Activated B cell treated with CpG ODN at 0.5 μM for 24 hours (primary cell): ENCODE measurements at regions of chr15 and their contacts with region 1.

Region 1: GRCh38 chr15:78944669-78945407 is at the start of gene CTSH:
- DNase-seq: peak; percentile 91
- ATAC-seq: peak; percentile 95
- H3K4me3 Mint-ChIP-seq: peak within 1 kb of the TSS; percentile 98
- H3K27ac Mint-ChIP-seq: peak within 1 kb of the TSS; percentile 89
- H3K4me1 Mint-ChIP-seq: peaks cover 40% of the 10 kb centered on the region
- H3K27me3 Mint-ChIP-seq: no peaks in the 10 kb centered on the region
- CTCF ChIP-seq: no peak
- total RNA-seq, gene CTSH: 721 and 762 TPM in 2 replicates

Region 2: GRCh38 chr15:78872972-78873792 is 71.7 kb before region 1 on chr15:
- CTCF ChIA-PET with region 1: interaction called, 3 read pairs
- POLR2A ChIA-PET with region 1: interaction called, 13 read pairs
- intact Hi-C with region 1: no loop called
- DNase-seq: peak; percentile 81
- ATAC-seq: peak; percentile 72
- H3K4me3 Mint-ChIP-seq: peak overlapping the region; percentile 98
- H3K27ac Mint-ChIP-seq: peak overlapping the region; percentile 100
- H3K4me1 Mint-ChIP-seq: peaks cover 39% of the 10 kb centered on the region
- H3K27me3 Mint-ChIP-seq: no peaks in the 10 kb centered on the region
- CTCF ChIP-seq: no peak

Region 3: GRCh38 chr15:78960308-78960707 is 15.5 kb after region 1 on chr15:
- CTCF ChIA-PET with region 1: no interaction called
- POLR2A ChIA-PET with region 1: no interaction called
- intact Hi-C with region 1: no loop called
- DNase-seq: no peak
- ATAC-seq: no peak
- H3K4me3 Mint-ChIP-seq: no peak overlapping the region
- H3K27ac Mint-ChIP-seq: no peak overlapping the region
- H3K4me1 Mint-ChIP-seq: no peaks in the 10 kb centered on the region
- H3K27me3 Mint-ChIP-seq: no peaks in the 10 kb centered on the region
- CTCF ChIP-seq: no peak

Region 4: GRCh38 chr15:78979456-78980320 is 34.9 kb after region 1 on chr15:
- CTCF ChIA-PET with region 1: interaction called, 4 read pairs
- POLR2A ChIA-PET with region 1: interaction called, 42 read pairs
- intact Hi-C with region 1: loop called (anchors 1 kb)
- DNase-seq: no peak
- ATAC-seq: no peak
- H3K4me3 Mint-ChIP-seq: peak overlapping the region; percentile 77
- H3K27ac Mint-ChIP-seq: peak overlapping the region; percentile 91
- H3K4me1 Mint-ChIP-seq: peaks cover 45% of the 10 kb centered on the region
- H3K27me3 Mint-ChIP-seq: no peaks in the 10 kb centered on the region
- CTCF ChIP-seq: no peak

Region 5: DNA sequence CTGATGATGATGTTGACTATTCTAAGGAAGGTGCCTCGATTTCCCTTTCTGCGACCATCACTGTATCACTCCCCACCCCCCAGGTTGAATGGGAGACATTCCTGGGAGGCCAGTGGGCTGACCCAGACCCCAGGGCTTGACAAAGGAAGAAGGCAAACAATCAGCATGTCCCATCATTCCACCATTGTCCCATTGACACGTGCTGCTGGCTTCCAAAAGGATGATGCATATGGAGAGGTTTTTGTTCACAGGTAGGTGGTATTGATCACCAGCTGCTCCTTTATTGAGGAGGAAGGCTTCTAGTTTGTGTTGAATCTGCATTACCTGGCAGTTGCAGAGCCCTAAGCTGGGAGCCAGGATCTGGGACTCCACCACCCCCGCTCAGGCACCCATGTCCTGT is 115.3 kb after region 1 on chr15:
- CTCF ChIA-PET with region 1: no interaction called
- POLR2A ChIA-PET with region 1: interaction called, 13 read pairs
- intact Hi-C with region 1: no loop called
- DNase-seq: no peak
- ATAC-seq: no peak
- H3K4me3 Mint-ChIP-seq: no peak overlapping the region
- H3K27ac Mint-ChIP-seq: no peak overlapping the region
- H3K4me1 Mint-ChIP-seq: no peaks in the 10 kb centered on the region
- H3K27me3 Mint-ChIP-seq: peaks cover 15% of the 10 kb centered on the region
- CTCF ChIP-seq: no peak

Region 6: DNA sequence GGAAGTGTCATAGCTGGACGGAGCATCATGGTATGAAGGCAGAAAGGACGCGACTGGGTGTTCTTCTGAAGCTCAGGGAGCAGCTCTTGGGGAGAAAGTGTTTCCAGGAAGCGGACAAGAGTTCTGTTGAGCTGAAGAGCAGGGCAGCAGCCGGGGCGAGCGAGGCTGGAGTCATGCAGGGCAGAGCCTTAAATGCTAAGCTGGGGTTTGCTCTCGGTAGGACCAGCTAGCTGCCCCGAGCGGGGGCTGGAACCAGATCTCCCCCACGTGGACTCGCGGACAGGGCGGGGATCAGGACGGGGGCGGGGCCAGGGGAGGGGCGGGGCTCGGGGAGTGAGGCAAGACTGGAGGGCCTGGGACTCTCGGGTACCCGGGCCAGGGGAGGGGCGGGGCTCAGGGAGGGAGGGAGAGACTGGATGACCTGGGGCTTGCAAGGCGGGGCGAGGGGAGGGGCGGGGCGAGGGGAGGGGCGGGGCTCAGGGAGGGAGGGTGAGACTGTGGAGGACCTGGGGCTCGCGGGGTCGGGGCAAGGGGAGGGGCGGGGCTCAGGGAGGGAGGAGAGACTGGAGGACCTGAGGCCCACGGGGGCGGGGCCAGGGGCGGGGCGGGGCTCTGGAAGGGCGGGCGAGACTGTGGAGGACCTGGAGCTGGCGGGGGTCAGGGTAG is 1207.5 kb after region 1 on chr15:
- CTCF ChIA-PET with region 1: no interaction called
- POLR2A ChIA-PET with region 1: no interaction called
- intact Hi-C with region 1: loop called (anchors 5 kb)
- DNase-seq: peak; percentile 66
- ATAC-seq: peak; percentile 87
- H3K4me3 Mint-ChIP-seq: peak overlapping the region; percentile 86
- H3K27ac Mint-ChIP-seq: peak overlapping the region; percentile 68
- H3K4me1 Mint-ChIP-seq: peaks cover 15% of the 10 kb centered on the region
- H3K27me3 Mint-ChIP-seq: no peaks in the 10 kb centered on the region
- CTCF ChIP-seq: no peak